Transverse colon (tissue), 4 donors: ENCODE measurements at regions of chr7 and their contacts with region 1.

Region 1: DNA sequence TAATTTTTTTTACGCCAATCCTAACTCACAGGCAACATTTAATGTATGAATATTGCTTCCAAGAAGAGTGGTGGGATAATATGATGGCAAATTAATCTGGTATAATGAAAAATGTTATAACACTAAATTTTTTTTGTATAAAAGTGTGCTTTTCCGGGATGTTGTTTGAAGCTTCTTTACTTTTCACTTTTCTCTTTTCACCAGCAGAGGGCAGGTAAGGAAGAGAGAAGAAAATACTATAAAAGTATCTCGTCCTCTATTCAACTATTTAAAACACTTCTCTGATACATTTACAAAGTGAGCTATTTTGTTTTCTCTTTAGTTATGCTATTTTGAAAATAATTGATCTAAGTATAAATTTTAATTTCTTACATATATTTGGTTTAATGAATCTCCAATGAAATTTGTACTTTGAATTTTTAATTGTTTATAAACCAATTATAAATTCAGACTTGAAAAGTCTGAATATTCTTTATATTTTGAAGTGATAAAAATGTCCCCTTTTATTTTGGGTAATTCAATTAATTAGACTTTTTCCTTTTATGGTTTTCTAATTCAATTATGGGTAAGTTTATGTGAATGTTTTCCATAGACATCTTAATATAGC is 20.7 kb upstream of the CFTR start:
- DNase-seq: no peak
- H3K4me3 ChIP-seq: no peak overlapping the region
- H3K27ac ChIP-seq: no peak overlapping the region
- H3K4me1 ChIP-seq: no peaks in the 10 kb centered on the region
- H3K27me3 ChIP-seq: no peaks in the 10 kb centered on the region
- CTCF ChIP-seq: peak; percentile 51 to 70 (median 64)
- EP300 ChIP-seq: no peak
- POLR2A ChIP-seq: no peak

Region 2: DNA sequence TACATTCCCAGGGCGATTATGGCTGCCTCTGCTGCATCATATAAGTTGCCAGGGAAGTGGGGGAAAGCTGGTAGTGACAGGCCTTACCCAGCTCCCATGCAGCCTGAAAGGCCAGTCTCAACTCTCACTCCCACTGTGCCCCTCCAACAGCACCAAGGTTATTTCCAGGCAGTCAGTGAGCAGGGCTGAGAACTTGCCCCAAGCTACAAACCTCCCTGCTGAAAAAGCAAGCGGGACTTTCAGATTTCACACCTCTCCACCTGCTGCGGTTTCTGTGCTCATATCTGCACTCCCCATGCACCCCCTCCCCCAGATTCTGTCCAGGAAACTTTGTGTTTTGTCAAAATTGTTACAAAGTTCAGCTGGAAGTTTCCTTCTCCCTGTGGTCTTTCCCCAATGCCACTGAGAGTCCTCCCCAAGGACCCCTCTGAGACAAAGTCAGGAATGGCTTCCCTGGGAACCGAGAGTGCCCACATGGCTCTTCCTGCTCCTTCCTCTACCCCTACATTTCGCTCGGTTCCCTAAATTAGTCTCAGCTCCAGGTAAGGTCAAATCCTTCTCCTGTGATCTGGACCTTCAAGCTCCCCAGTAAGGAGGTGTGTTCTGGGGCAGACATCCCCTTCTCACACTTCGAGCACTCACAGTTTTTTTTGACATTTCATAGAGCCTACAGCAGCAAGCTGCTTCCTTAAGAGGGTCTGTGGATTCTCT is 111.0 kb before region 1 on chr7:
- in situ Hi-C with region 1: no loop called
- intact Hi-C with region 1: no loop called
- DNase-seq: no peak
- H3K4me3 ChIP-seq: no peak overlapping the region
- H3K27ac ChIP-seq: no peak overlapping the region
- H3K4me1 ChIP-seq: no peaks in the 10 kb centered on the region
- H3K27me3 ChIP-seq: no peaks in the 10 kb centered on the region
- CTCF ChIP-seq: no peak
- EP300 ChIP-seq: no peak
- POLR2A ChIP-seq: no peak

Region 3: DNA sequence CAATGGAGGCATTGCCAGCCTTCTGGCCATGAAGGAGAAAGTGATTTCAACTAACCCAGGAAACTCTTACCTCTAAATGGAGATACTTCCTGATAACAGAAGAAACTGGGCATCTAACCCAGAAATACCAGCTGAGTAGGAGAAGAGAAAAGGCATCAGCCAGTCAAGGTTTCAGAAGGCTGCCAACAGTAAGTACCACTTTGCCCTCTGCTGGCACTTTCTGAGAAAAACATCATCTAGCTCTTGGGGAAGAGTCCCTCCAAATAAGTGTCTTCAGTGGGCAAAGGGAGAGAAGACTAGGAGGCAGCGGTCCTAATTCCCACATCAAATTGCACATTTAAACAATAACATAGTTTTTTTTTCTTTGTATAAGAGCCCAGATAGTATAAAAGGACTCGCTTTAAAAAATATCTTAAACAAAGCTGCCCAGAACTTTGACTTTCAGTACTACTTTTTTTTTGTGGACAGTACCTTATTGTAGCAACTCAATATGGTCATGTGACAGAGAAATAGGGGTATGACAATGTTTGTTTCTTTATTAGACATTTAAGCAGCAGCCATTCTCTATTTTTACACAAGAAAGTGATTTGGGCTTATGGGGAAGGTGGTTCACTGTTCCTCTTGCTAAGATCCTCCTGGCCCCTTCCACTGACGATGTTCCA is 256.8 kb after region 1 on chr7:
- in situ Hi-C with region 1: loop called (anchors 10 to 25 kb)
- intact Hi-C with region 1: loop called (anchors 10 kb)
- DNase-seq: peak; percentile 35
- H3K4me3 ChIP-seq: no peak overlapping the region
- H3K27ac ChIP-seq: no peak overlapping the region
- H3K4me1 ChIP-seq: peaks cover 0 to 8% (median 2%) of the 10 kb centered on the region in 4 donors
- H3K27me3 ChIP-seq: no peaks in the 10 kb centered on the region
- CTCF ChIP-seq: peak; percentile 34 to 72 (median 50)
- EP300 ChIP-seq: no peak
- POLR2A ChIP-seq: no peak

Region 4: GRCh38 chr7:117731455-117731854 is 272.4 kb after region 1 on chr7:
- in situ Hi-C with region 1: loop called in 2 of 4 experiments (anchors 10 kb)
- intact Hi-C with region 1: no loop called
- DNase-seq: no peak
- H3K4me3 ChIP-seq: no peak overlapping the region
- H3K27ac ChIP-seq: no peak overlapping the region
- H3K4me1 ChIP-seq: no peaks in the 10 kb centered on the region
- H3K27me3 ChIP-seq: no peaks in the 10 kb centered on the region
- CTCF ChIP-seq: no peak
- EP300 ChIP-seq: no peak
- POLR2A ChIP-seq: no peak

Region 5: GRCh38 chr7:117759950-117760640 is 301.0 kb after region 1 on chr7:
- in situ Hi-C with region 1: no loop called
- intact Hi-C with region 1: no loop called
- DNase-seq: no peak
- H3K4me3 ChIP-seq: no peak overlapping the region
- H3K27ac ChIP-seq: no peak overlapping the region
- H3K4me1 ChIP-seq: no peaks in the 10 kb centered on the region
- H3K27me3 ChIP-seq: no peaks in the 10 kb centered on the region
- CTCF ChIP-seq: no peak
- EP300 ChIP-seq: no peak
- POLR2A ChIP-seq: no peak